BJ (cell line): ENCODE measurements at regions of chr11 and their contacts with region 1.

Region 1: DNA sequence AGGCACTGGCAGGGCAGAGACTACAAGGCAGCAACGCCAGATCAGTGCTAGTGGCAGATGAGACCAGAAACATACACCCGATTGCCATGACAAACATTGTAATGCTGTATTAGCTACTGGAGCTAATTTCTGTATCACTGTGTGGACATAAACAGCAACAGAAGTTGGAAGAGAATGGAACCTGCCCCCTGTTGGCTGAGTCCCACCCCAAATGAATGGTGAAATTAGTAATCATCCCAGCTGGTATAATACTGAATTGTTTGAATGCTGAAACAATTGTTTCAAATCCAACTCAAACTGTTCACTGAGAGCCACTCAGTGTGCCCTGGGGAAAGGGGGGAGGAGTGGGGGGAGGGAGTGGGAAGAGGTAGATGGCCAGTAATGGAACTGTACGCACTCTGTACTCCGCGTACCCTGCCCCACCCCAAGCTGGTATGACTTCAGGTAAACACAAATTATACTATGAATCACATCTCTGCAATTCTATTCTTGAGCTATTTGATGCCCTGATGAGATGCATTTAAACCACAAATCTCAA is 11.2 kb upstream of the BIRC3 start:
- DNase-seq: no peak
- H3K4me3 ChIP-seq: no peak overlapping the region
- H3K27me3 ChIP-seq: no peaks in the 10 kb centered on the region; the same call in 1 of the 2 replicates
- CTCF ChIP-seq: no peak

Region 2: DNA sequence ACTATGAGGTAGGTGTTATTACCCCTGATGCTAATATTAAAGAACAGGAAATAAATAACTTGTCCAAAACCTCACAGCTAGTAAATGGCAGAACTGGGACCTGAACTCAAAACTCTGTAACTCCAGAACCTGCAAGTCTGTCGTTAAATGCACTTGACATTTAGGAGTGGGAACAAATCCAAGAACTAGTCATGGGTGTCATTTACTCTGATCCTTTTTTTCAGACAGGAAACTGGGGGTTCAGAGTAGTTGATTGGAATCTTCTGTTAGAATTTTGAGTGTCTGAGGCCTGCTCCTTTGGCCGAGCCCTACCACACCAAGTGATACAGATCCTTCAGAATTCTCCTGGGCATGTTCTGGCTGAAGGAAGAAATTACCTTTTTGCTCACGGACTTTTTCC is 197.4 kb before region 1 on chr11:
- CTCF ChIA-PET with region 1: no interaction called
- POLR2A ChIA-PET with region 1: no interaction called
- DNase-seq: no peak
- H3K4me3 ChIP-seq: no peak overlapping the region
- H3K27me3 ChIP-seq: no peaks in the 10 kb centered on the region
- CTCF ChIP-seq: no peak

Region 3: DNA sequence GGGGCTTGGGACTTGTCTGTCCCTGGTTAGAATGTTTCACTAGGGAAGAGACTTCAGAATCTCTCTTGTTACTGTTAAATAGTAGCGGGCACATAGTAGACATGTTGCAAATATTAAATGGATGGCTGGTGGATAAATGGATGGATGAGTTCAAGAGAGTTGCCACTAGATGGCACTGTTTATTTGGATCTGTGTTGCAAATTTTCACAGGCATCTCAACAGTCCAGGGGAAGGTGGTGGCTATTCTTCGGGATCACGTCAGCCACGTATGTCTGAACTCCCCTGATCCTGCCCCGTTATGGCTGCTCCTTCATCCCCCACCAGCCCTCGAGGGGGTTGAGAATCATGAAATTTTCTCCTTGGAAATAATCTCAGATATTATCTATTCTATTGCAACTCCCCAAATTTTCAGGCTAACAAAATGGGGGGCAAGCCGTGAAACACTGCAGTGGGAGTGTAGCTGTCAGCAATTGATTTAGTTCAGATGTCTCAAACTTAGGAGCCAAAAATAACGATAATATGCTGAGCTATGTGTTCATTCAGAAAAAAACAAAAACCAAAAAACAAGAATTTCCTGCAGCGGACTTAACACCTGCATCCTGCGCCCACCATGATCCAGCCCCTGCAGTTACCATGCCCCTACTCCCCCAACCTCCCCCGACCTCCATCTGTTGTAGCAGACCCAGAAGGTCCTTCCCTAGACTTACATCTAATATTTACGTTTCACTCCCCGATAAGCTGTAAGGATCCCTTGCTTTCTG is 18.0 kb before region 1 on chr11:
- CTCF ChIA-PET with region 1: interaction called, 22 read pairs
- POLR2A ChIA-PET with region 1: no interaction called
- DNase-seq: no peak
- H3K4me3 ChIP-seq: no peak overlapping the region
- H3K27me3 ChIP-seq: no peaks in the 10 kb centered on the region
- CTCF ChIP-seq: peak; percentile 68

Region 4: DNA sequence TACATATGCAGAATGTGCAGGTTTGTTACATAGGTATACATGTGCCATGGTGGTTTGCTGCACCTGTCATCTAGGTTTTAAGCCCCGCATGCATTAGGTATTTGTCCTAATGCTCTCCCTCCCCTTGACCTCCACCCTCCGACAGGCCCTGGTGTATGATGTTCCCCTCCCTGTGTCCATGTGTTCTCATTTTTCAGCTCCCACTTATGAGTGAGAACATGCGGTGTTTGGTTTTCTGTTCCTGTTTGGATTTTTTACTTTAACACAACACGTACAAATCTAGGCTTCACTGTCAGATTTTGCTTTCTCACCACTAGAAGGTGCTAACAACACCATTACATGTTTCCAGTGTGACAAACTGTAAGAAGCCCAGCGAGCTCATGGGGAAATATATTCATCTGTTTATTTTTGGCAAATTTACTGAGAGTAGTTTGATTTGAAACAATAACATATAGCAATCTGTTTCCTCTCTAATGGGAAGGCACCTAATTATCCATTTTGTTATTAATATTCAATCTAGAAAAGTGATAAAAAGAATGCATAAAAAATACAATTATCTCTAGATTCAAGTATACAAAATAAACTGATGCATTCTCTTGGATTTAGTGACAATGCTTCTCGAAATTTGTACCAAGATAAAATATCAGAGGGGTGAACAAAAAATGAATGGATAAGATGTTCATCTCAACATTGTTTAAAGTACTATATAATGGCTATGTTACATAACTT is 12.1 kb before region 1 on chr11:
- CTCF ChIA-PET with region 1: interaction called, 22 read pairs
- POLR2A ChIA-PET with region 1: no interaction called
- DNase-seq: no peak
- H3K4me3 ChIP-seq: no peak overlapping the region
- H3K27me3 ChIP-seq: no peaks in the 10 kb centered on the region
- CTCF ChIP-seq: peak; percentile 72

Region 5: DNA sequence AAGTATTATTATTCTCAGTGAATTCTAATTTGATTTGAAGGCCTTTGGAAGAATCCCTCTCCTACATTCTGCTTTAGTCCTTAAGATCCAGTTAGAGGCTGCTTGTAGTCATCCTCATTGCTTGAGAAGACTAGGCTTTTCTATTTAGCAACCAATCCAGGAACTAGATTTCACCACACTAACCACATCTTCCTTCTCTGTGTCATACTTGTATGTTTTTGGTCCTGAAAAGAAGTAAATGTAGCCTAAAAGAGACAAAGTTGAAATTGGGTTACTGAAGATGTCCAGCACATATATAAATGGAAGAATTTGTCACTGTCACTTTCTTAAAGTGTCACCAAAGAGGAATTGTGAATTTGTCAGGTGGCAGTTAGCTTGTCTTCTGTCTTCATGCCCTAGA is 271.1 kb after region 1 on chr11:
- CTCF ChIA-PET with region 1: no interaction called
- POLR2A ChIA-PET with region 1: no interaction called
- DNase-seq: no peak
- H3K4me3 ChIP-seq: no peak overlapping the region
- H3K27me3 ChIP-seq: no peaks in the 10 kb centered on the region
- CTCF ChIP-seq: no peak